ENCODE measurements at regions of chr1 and their contacts with region 1.

Region 1: DNA sequence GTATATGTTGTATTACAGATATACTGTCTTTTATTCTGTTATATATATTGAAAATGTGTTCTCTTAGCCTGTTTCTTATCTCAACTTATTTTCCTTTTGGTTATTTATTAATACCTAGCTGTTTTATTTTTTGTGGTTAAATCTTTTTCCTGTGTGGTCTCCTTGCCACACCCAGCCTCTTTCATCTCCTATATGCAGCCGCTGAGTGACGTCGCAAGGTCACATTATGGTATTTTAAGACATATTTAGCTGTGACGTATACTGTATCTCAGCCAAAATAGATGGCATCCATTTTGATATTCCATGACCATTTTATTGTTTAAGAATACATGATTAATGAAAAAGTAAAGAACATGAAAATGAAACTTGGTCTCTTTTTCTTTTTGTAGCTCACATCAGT is 29.1 kb downstream of the CENPF start:
- DNase-seq: peak in 7 of 9 donors; percentile 48 to 79 (median 71)
- ATAC-seq: peak; percentile 78
- H3K4me3 ChIP-seq: no peak overlapping the region
- H3K4me3 Mint-ChIP-seq: peak overlapping the region in 9 of 10 donors; percentile 13 to 80 (median 62)
- H3K27ac ChIP-seq: no peak overlapping the region
- H3K27ac Mint-ChIP-seq: peak overlapping the region; percentile 56 to 96 (median 87)
- H3K4me1 ChIP-seq: peaks cover 6 to 15% of the 10 kb centered on the region in 2 donors
- H3K4me1 Mint-ChIP-seq: peaks cover 8 to 47% (median 27%) of the 10 kb centered on the region in 7 donors
- H3K27me3 ChIP-seq: no peaks in the 10 kb centered on the region
- H3K27me3 Mint-ChIP-seq: no peaks in the 10 kb centered on the region

Region 2: GRCh38 chr1:214270187-214270586 is 361.9 kb before region 1 on chr1:
- CTCF ChIA-PET with region 1: no interaction called
- POLR2A ChIA-PET with region 1: no interaction called
- intact Hi-C with region 1: no loop called
- DNase-seq: no peak
- ATAC-seq: no peak
- H3K4me3 ChIP-seq: no peak overlapping the region
- H3K4me3 Mint-ChIP-seq: no peak overlapping the region
- H3K27ac ChIP-seq: no peak overlapping the region
- H3K27ac Mint-ChIP-seq: no peak overlapping the region
- H3K4me1 ChIP-seq: no peaks in the 10 kb centered on the region
- H3K4me1 Mint-ChIP-seq: peaks cover 0 to 10% (median 0%) of the 10 kb centered on the region in 7 donors
- H3K27me3 ChIP-seq: no peaks in the 10 kb centered on the region
- H3K27me3 Mint-ChIP-seq: peaks cover 6 to 56% (median 23%) of the 10 kb centered on the region in 5 donors

Region 3: DNA sequence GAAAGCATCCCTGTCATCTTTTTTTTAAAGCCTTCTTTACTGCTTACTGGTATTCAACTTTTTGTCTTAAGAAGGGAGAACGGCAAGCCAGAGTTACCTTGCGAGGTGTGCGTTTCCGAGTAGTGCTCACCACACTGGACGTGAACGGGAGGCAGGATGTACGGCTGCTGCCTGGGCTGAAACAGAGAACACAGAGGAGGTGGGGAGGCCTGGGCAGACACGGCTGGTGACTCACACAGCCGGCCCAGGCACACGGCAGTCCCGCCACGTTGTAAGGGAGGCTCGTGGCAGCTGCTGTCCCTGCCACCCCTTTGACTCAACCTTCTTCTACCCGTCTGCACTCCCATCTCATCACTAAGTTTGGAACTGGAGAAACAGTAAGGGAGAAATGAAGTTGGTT is 245.3 kb before region 1 on chr1:
- CTCF ChIA-PET with region 1: no interaction called
- POLR2A ChIA-PET with region 1: no interaction called
- intact Hi-C with region 1: loop called in 1 of 2 experiments (anchors 1 kb)
- DNase-seq: peak in 1 of 9 donors; percentile 34
- ATAC-seq: no peak
- H3K4me3 ChIP-seq: no peak overlapping the region
- H3K4me3 Mint-ChIP-seq: peak overlapping the region in 1 of 10 donors; percentile 80
- H3K27ac ChIP-seq: no peak overlapping the region
- H3K27ac Mint-ChIP-seq: peak overlapping the region in 2 of 9 donors; percentile 47 to 94
- H3K4me1 ChIP-seq: no peaks in the 10 kb centered on the region
- H3K4me1 Mint-ChIP-seq: peaks cover 0 to 26% (median 0%) of the 10 kb centered on the region in 7 donors
- H3K27me3 ChIP-seq: no peaks in the 10 kb centered on the region
- H3K27me3 Mint-ChIP-seq: no peaks in the 10 kb centered on the region

Region 4: GRCh38 chr1:214506972-214507482 is 125.1 kb before region 1 on chr1:
- CTCF ChIA-PET with region 1: no interaction called
- POLR2A ChIA-PET with region 1: no interaction called
- intact Hi-C with region 1: no loop called
- DNase-seq: no peak
- ATAC-seq: no peak
- H3K4me3 ChIP-seq: no peak overlapping the region
- H3K4me3 Mint-ChIP-seq: no peak overlapping the region
- H3K27ac ChIP-seq: no peak overlapping the region
- H3K27ac Mint-ChIP-seq: no peak overlapping the region
- H3K4me1 ChIP-seq: no peaks in the 10 kb centered on the region
- H3K4me1 Mint-ChIP-seq: peaks cover 0 to 4% (median 0%) of the 10 kb centered on the region in 7 donors
- H3K27me3 ChIP-seq: no peaks in the 10 kb centered on the region
- H3K27me3 Mint-ChIP-seq: peaks cover 10 to 31% (median 18%) of the 10 kb centered on the region in 5 donors

Region 5: GRCh38 chr1:214617246-214617645 is 14.8 kb before region 1 on chr1:
- CTCF ChIA-PET with region 1: interaction called, 5 read pairs
- POLR2A ChIA-PET with region 1: no interaction called
- intact Hi-C with region 1: loop called in 1 of 2 experiments (anchors 1 kb)
- DNase-seq: peak in 3 of 9 donors; percentile 16 to 22 (median 16)
- ATAC-seq: no peak
- H3K4me3 ChIP-seq: no peak overlapping the region
- H3K4me3 Mint-ChIP-seq: peak overlapping the region; percentile 40 to 71 (median 48)
- H3K27ac ChIP-seq: no peak overlapping the region
- H3K27ac Mint-ChIP-seq: peak overlapping the region in 8 of 9 donors; percentile 66 to 83 (median 78)
- H3K4me1 ChIP-seq: peaks cover 0 to 3% of the 10 kb centered on the region in 2 donors
- H3K4me1 Mint-ChIP-seq: peaks cover 6 to 40% (median 14%) of the 10 kb centered on the region in 7 donors
- H3K27me3 ChIP-seq: no peaks in the 10 kb centered on the region
- H3K27me3 Mint-ChIP-seq: no peaks in the 10 kb centered on the region

Region 6: DNA sequence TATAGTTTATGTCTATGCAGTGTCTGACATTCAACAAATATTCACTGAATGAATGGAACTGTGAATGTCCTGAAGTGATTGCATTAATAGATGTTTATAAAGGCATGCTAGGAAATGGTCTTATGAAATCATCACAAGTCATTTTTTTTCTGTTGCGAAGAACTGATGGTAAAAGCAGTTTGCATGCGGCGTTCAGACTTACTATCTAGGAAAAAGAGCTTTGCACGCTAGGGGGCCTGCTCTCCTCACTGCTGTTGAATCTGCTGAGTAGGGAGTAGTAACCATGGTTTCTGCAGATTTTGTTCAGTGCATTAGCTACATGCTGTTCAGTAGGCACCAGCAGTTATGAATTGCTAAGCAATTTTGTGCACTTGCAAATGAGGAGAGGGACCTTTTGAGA is 28.8 kb after region 1 on chr1:
- CTCF ChIA-PET with region 1: interaction called, 5 read pairs
- POLR2A ChIA-PET with region 1: no interaction called
- intact Hi-C with region 1: loop called in 1 of 2 experiments (anchors 1 kb)
- DNase-seq: peak in 7 of 9 donors; percentile 7 to 51 (median 45)
- ATAC-seq: peak; percentile 49
- H3K4me3 ChIP-seq: no peak overlapping the region
- H3K4me3 Mint-ChIP-seq: no peak overlapping the region
- H3K27ac ChIP-seq: no peak overlapping the region
- H3K27ac Mint-ChIP-seq: peak overlapping the region in 4 of 9 donors; percentile 8 to 42 (median 30)
- H3K4me1 ChIP-seq: no peaks in the 10 kb centered on the region
- H3K4me1 Mint-ChIP-seq: peaks cover 0 to 20% (median 7%) of the 10 kb centered on the region in 7 donors
- H3K27me3 ChIP-seq: no peaks in the 10 kb centered on the region
- H3K27me3 Mint-ChIP-seq: no peaks in the 10 kb centered on the region

Region 7: GRCh38 chr1:214673576-214673975 is 41.5 kb after region 1 on chr1:
- CTCF ChIA-PET with region 1: no interaction called
- POLR2A ChIA-PET with region 1: no interaction called
- intact Hi-C with region 1: no loop called
- DNase-seq: no peak
- ATAC-seq: no peak
- H3K4me3 ChIP-seq: no peak overlapping the region
- H3K4me3 Mint-ChIP-seq: no peak overlapping the region
- H3K27ac ChIP-seq: no peak overlapping the region
- H3K27ac Mint-ChIP-seq: no peak overlapping the region
- H3K4me1 ChIP-seq: no peaks in the 10 kb centered on the region
- H3K4me1 Mint-ChIP-seq: no peaks in the 10 kb centered on the region
- H3K27me3 ChIP-seq: no peaks in the 10 kb centered on the region
- H3K27me3 Mint-ChIP-seq: no peaks in the 10 kb centered on the region

Region 8: GRCh38 chr1:215146341-215146826 is 514.3 kb after region 1 on chr1:
- CTCF ChIA-PET with region 1: no interaction called
- POLR2A ChIA-PET with region 1: no interaction called
- intact Hi-C with region 1: loop called in 1 of 2 experiments (anchors 1 kb)
- DNase-seq: peak in 4 of 9 donors; percentile 4 to 23 (median 12)
- ATAC-seq: no peak
- H3K4me3 ChIP-seq: no peak overlapping the region
- H3K4me3 Mint-ChIP-seq: no peak overlapping the region
- H3K27ac ChIP-seq: no peak overlapping the region
- H3K27ac Mint-ChIP-seq: no peak overlapping the region
- H3K4me1 ChIP-seq: no peaks in the 10 kb centered on the region
- H3K4me1 Mint-ChIP-seq: peaks cover 0 to 9% (median 0%) of the 10 kb centered on the region in 7 donors
- H3K27me3 ChIP-seq: no peaks in the 10 kb centered on the region
- H3K27me3 Mint-ChIP-seq: peaks cover 0 to 10% (median 0%) of the 10 kb centered on the region in 5 donors

Region 9: DNA sequence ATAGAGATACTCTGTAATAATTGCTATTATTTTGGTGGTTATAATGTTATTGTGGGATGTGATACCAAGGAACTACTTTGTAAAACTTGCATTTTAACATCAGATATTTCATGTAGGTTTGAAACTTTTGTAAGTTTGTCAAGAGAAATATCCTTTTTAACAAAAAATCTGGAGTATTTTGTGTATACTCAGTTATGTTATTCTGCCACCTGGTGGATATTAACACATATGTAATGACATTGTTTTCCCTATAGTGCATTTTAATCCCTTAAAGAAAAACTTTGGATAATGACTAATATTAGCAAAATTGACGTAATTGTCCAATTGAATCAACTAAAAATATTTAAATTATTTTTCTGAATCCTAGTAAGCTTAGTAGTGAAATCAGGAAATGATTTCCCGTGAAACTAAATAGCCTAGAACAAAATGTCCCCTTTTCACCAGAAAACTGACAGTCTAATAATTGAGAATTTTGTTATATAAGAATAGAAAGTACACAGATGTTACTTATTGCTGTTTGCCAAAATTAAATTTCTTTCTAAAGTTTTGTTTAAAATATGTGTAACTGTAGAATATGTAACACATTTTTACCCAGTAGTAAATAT is 974.6 kb after region 1 on chr1:
- CTCF ChIA-PET with region 1: no interaction called
- POLR2A ChIA-PET with region 1: no interaction called
- intact Hi-C with region 1: loop called in 1 of 2 experiments (anchors 1 kb)
- DNase-seq: no peak
- ATAC-seq: no peak
- H3K4me3 ChIP-seq: no peak overlapping the region
- H3K4me3 Mint-ChIP-seq: no peak overlapping the region
- H3K27ac ChIP-seq: no peak overlapping the region
- H3K27ac Mint-ChIP-seq: no peak overlapping the region
- H3K4me1 ChIP-seq: no peaks in the 10 kb centered on the region
- H3K4me1 Mint-ChIP-seq: no peaks in the 10 kb centered on the region
- H3K27me3 ChIP-seq: no peaks in the 10 kb centered on the region
- H3K27me3 Mint-ChIP-seq: no peaks in the 10 kb centered on the region